Prostate gland (tissue), 2 donors: ENCODE measurements at regions of chr10 and their contacts with region 1.

Region 1: GRCh38 chr10:5094265-5095205 is at the start of gene AKR1C3:
- DNase-seq: no peak
- H3K4me3 ChIP-seq: peak within 1 kb of the TSS; percentile 12 to 14
- H3K27ac ChIP-seq: no peak within 1 kb of the TSS
- H3K4me1 ChIP-seq: no peaks in the 10 kb centered on the region
- H3K27me3 ChIP-seq: no peaks in the 10 kb centered on the region
- CTCF ChIP-seq: peak in 3 of 4 experiments; percentile 50 to 76 (median 67)
- POLR2A ChIP-seq: no peak
- total RNA-seq, gene AKR1C3: 6.5 to 12.8 TPM

Region 2: DNA sequence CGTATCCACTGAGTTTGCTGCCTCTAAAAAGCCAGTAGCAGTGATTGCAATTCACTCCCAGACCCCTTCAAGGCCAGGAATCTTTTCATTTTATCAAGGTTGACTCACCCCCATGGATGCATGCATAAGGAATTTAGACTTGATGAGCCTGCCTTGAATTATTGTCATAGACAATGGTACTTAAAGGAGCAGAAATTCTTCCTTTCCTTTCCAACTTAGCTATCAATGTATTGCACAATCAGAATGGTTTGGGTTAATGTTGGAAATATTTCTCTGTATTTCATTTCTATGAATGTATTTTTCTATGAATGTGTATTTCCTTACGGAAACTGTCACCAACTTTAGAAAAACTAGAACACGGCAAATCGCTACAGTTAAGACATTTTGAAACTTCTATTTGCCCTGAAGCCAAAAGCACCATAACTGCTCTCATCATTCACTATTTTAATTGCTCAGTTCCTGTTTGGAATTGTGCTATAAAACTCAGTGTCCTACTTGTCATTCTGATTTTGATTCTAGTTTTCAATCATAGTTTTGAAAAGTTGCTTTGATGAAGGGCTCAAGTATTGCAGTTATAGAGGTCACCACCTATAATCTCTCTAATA is 624.2 kb before region 1 on chr10:
- intact Hi-C with region 1: no loop called
- DNase-seq: no peak
- H3K4me3 ChIP-seq: no peak overlapping the region
- H3K27ac ChIP-seq: no peak overlapping the region
- H3K4me1 ChIP-seq: no peaks in the 10 kb centered on the region
- H3K27me3 ChIP-seq: no peaks in the 10 kb centered on the region
- CTCF ChIP-seq: no peak
- POLR2A ChIP-seq: no peak

Region 3: GRCh38 chr10:5014936-5015335 is 79.6 kb before region 1 on chr10:
- intact Hi-C with region 1: loop called (anchors 10 kb)
- DNase-seq: no peak
- H3K4me3 ChIP-seq: no peak overlapping the region
- H3K27ac ChIP-seq: no peak overlapping the region
- H3K4me1 ChIP-seq: no peaks in the 10 kb centered on the region
- H3K27me3 ChIP-seq: no peaks in the 10 kb centered on the region
- CTCF ChIP-seq: no peak
- POLR2A ChIP-seq: no peak

Region 4: GRCh38 chr10:5043716-5044115 is 50.8 kb before region 1 on chr10:
- intact Hi-C with region 1: loop called (anchors 5 kb)
- DNase-seq: peak; percentile 84
- H3K4me3 ChIP-seq: no peak overlapping the region
- H3K27ac ChIP-seq: no peak overlapping the region
- H3K4me1 ChIP-seq: no peaks in the 10 kb centered on the region
- H3K27me3 ChIP-seq: peaks cover 2% of the 10 kb centered on the region
- CTCF ChIP-seq: no peak
- POLR2A ChIP-seq: no peak

Region 5: GRCh38 chr10:5385224-5385623 is 290.7 kb after region 1 on chr10:
- intact Hi-C with region 1: loop called (anchors 10 kb)
- DNase-seq: no peak
- H3K4me3 ChIP-seq: no peak overlapping the region
- H3K27ac ChIP-seq: no peak overlapping the region
- H3K4me1 ChIP-seq: no peaks in the 10 kb centered on the region
- H3K27me3 ChIP-seq: no peaks in the 10 kb centered on the region
- CTCF ChIP-seq: no peak
- POLR2A ChIP-seq: no peak